CD8-positive, alpha-beta T cell (primary cell): ENCODE measurements at regions of chr5 and their contacts with region 1.

Region 1: GRCh38 chr5:150458819-150459557 is 9.4 kb upstream of the RPS14 start:
- DNase-seq: peak; percentile 73 to 93 (median 84)
- ATAC-seq: peak; percentile 93
- H3K4me3 ChIP-seq: no peak overlapping the region
- H3K4me3 Mint-ChIP-seq: peak overlapping the region; percentile 51
- H3K27ac ChIP-seq: peak overlapping the region; percentile 13 to 31
- H3K27ac Mint-ChIP-seq: peak overlapping the region; percentile 67
- H3K4me1 ChIP-seq: peaks cover 20% of the 10 kb centered on the region
- H3K4me1 Mint-ChIP-seq: peaks cover 37% of the 10 kb centered on the region
- H3K27me3 ChIP-seq: no peaks in the 10 kb centered on the region
- H3K27me3 Mint-ChIP-seq: no peaks in the 10 kb centered on the region
- CTCF ChIP-seq: peak; percentile 68

Region 2: DNA sequence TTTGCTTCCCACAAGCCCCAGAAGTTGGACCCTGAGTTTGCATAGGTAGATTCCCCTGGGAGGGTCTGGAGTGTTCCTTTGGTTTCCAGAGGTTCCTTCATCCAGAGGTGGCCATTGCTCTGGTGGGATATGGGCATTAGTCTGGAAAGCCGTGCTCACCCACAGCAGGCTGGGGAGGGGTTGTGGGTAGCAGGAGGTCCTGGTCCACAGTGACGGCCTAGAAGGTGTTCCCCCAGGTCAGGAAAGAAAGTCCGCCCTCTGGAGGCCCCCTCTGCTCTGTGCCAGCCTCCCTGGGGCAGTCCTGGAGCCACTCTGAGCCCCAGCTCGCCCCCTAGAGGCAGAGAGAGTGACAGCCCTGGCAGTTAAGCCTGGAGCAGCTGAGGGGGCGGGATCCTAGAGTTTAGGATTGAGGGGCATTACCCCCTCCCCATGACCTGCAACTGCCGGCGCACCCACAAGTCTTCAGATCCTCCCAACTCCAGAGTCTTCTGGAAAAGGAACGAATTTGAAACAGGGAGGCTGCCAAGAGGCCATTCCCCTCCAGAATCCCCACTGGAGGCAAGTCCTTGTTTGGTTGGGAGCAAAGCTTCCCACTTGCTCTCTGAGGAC is 85.7 kb after region 1 on chr5:
- CTCF ChIA-PET with region 1: interaction called, 5 read pairs
- POLR2A ChIA-PET with region 1: no interaction called
- intact Hi-C with region 1: loop called (anchors 1 to 5 kb)
- DNase-seq: peak; percentile 25 to 72 (median 53)
- ATAC-seq: peak; percentile 91
- H3K4me3 ChIP-seq: no peak overlapping the region
- H3K4me3 Mint-ChIP-seq: no peak overlapping the region
- H3K27ac ChIP-seq: no peak overlapping the region
- H3K27ac Mint-ChIP-seq: no peak overlapping the region
- H3K4me1 ChIP-seq: no peaks in the 10 kb centered on the region
- H3K4me1 Mint-ChIP-seq: no peaks in the 10 kb centered on the region
- H3K27me3 ChIP-seq: no peaks in the 10 kb centered on the region
- H3K27me3 Mint-ChIP-seq: no peaks in the 10 kb centered on the region
- CTCF ChIP-seq: peak; percentile 44

Region 3: DNA sequence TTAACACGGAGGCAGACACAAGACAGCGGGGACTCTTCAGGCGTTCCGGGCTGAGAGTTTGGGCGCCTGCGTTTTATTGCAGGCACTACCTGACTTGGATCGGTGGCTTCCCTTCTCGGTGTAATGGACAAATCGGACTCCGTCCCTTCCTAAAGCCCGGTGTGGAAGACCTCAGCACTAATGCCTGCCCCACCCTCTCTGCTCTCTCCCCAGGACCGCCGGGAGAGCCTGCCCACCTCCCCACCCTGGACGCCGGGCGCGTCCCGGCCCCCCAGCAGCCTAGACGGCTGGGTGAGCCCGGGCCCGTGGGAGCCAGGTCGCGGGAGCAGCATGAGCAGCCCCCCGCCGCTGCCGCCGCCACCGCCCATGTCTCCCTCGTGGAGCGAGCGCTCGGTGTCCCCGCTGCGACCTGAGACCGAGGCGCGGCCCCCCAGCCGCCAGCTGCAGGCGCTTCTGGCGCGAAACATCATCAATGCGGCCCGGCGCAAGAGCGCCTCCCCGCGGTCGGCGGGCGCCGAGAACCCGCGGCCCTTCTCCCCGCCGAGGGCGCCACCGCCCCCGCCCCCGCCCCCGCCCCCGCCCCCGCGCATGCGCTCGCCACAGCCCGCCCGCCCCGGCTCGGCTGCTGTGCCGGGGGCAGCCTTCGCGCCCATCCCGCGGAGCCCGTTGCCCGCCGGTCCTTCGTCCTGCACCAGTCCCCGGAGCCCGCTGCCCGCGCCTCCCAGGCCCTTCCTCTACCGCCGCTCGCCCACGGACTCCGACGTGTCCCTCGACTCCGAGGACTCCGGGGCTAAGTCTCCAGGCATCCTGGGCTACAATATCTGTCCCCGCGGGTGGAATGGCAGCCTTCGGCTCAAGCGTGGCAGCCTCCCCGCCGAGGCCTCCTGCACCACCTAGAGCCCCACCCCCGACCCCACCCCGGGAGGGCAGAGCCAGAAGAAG is 197.5 kb after region 1 on chr5:
- CTCF ChIA-PET with region 1: no interaction called
- POLR2A ChIA-PET with region 1: no interaction called
- intact Hi-C with region 1: loop called (anchors 1 to 2 kb)
- DNase-seq: peak; percentile 61 to 90 (median 80)
- ATAC-seq: peak; percentile 93
- H3K4me3 ChIP-seq: peak overlapping the region; percentile 51 to 63
- H3K4me3 Mint-ChIP-seq: peak overlapping the region; percentile 78
- H3K27ac ChIP-seq: no peak overlapping the region
- H3K27ac Mint-ChIP-seq: no peak overlapping the region
- H3K4me1 ChIP-seq: peaks cover 6% of the 10 kb centered on the region
- H3K4me1 Mint-ChIP-seq: peaks cover 4% of the 10 kb centered on the region
- H3K27me3 ChIP-seq: no peaks in the 10 kb centered on the region
- H3K27me3 Mint-ChIP-seq: no peaks in the 10 kb centered on the region
- CTCF ChIP-seq: peak; percentile 53

Region 4: GRCh38 chr5:150801117-150801927 is 342.3 kb after region 1 on chr5:
- CTCF ChIA-PET with region 1: interaction called, 4 read pairs
- POLR2A ChIA-PET with region 1: no interaction called
- intact Hi-C with region 1: loop called in 1 of 2 experiments (anchors 5 kb)
- DNase-seq: peak in 2 of 9 experiments; percentile 62 to 71
- ATAC-seq: peak; percentile 54
- H3K4me3 ChIP-seq: no peak overlapping the region
- H3K4me3 Mint-ChIP-seq: no peak overlapping the region
- H3K27ac ChIP-seq: no peak overlapping the region
- H3K27ac Mint-ChIP-seq: no peak overlapping the region
- H3K4me1 ChIP-seq: peaks cover 5% of the 10 kb centered on the region
- H3K4me1 Mint-ChIP-seq: peaks cover 4% of the 10 kb centered on the region
- H3K27me3 ChIP-seq: no peaks in the 10 kb centered on the region
- H3K27me3 Mint-ChIP-seq: peaks cover 4% of the 10 kb centered on the region
- CTCF ChIP-seq: peak; percentile 78

Region 5: DNA sequence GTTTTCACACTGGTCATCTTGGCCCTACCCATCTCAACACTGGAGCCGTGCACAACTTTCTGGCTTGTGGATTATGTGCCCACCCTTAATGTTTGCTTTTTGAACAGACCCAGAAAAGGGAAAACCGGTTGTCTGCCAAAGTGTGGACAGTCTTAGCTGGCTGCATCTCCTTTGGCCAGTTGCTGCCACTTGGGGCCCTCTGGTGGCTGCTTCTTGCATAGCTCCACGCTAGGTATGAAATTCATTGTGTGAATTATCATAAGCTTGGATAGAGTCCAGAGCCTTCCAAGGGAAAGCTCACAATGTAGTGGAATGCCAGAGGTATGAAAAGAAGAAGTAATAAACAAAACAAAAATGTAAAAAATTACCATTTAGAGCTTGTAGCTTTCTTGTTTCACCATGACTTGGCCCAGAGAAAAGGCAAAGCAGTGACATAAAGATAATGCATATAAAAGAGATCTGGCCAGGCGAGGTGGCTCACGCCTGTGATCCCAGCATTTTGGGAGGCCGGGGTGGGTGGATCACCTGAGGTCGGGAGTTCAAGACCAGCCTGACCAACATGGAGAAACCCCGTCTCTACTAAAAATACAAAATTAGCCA is 857.1 kb after region 1 on chr5:
- CTCF ChIA-PET with region 1: no interaction called
- POLR2A ChIA-PET with region 1: no interaction called
- intact Hi-C with region 1: no loop called
- DNase-seq: peak in 8 of 9 experiments; percentile 9 to 58 (median 38)
- ATAC-seq: peak; percentile 52
- H3K4me3 ChIP-seq: no peak overlapping the region
- H3K4me3 Mint-ChIP-seq: no peak overlapping the region
- H3K27ac ChIP-seq: no peak overlapping the region
- H3K27ac Mint-ChIP-seq: no peak overlapping the region
- H3K4me1 ChIP-seq: no peaks in the 10 kb centered on the region
- H3K4me1 Mint-ChIP-seq: no peaks in the 10 kb centered on the region
- H3K27me3 ChIP-seq: peaks cover 0 to 2% of the 10 kb centered on the region in 2 experiments
- H3K27me3 Mint-ChIP-seq: peaks cover 16% of the 10 kb centered on the region
- CTCF ChIP-seq: peak; percentile 62